ENCODE measurements at regions of chr9 and their contacts with region 1.

Region 1: GRCh38 chr9:127444921-127445850 is 6.0 kb downstream of the RPL12 start:
- DNase-seq: peak in 1 of 2 donors; percentile 27
- H3K4me3 ChIP-seq: no peak overlapping the region
- H3K27ac ChIP-seq: peak overlapping the region; percentile 44 to 54
- H3K4me1 ChIP-seq: no peaks in the 10 kb centered on the region
- H3K27me3 ChIP-seq: no peaks in the 10 kb centered on the region
- CTCF ChIP-seq: no peak
- POLR2A ChIP-seq: no peak

Region 2: DNA sequence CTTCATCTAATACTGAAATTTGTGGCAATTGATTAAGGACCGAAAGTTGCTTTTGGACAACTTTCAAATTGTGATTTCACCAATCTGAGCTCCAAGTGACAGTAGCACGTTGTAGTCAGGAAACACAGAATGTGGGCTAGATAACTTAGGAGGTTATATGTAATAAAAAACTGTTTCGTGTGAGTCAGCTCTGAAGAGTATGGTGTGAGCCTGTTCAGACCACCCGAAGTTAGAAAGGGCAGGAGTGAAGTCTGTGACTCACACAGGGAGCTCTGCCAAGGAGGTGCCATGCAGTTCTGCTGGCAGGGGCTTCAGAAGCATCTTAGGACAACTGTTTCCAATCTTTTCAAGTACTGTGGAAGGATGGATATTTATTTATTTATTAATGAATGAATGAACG is 601.1 kb before region 1 on chr9:
- intact Hi-C with region 1: no loop called
- DNase-seq: no peak
- H3K4me3 ChIP-seq: no peak overlapping the region
- H3K27ac ChIP-seq: no peak overlapping the region
- H3K4me1 ChIP-seq: peaks cover 0 to 7% of the 10 kb centered on the region in 2 donors
- H3K27me3 ChIP-seq: no peaks in the 10 kb centered on the region
- CTCF ChIP-seq: no peak
- POLR2A ChIP-seq: no peak

Region 3: GRCh38 chr9:128921881-128922763 is 1476.9 kb after region 1 on chr9:
- intact Hi-C with region 1: no loop called
- DNase-seq: peak in 1 of 2 donors; percentile 39
- H3K4me3 ChIP-seq: peak overlapping the region; percentile 56 to 83 (median 67)
- H3K27ac ChIP-seq: peak overlapping the region; percentile 94 to 96
- H3K4me1 ChIP-seq: peaks cover 0 to 3% of the 10 kb centered on the region in 2 donors
- H3K27me3 ChIP-seq: no peaks in the 10 kb centered on the region
- CTCF ChIP-seq: peak in 2 of 3 donors; percentile 23 to 27
- POLR2A ChIP-seq: no peak

Region 4: GRCh38 chr9:128972956-128973355 is 1527.8 kb after region 1 on chr9:
- intact Hi-C with region 1: loop called (anchors 10 kb)
- DNase-seq: no peak
- H3K4me3 ChIP-seq: no peak overlapping the region
- H3K27ac ChIP-seq: no peak overlapping the region
- H3K4me1 ChIP-seq: no peaks in the 10 kb centered on the region
- H3K27me3 ChIP-seq: no peaks in the 10 kb centered on the region
- CTCF ChIP-seq: no peak
- POLR2A ChIP-seq: no peak

Region 5: GRCh38 chr9:129125476-129125875 is 1680.3 kb after region 1 on chr9:
- intact Hi-C with region 1: no loop called
- DNase-seq: no peak
- H3K4me3 ChIP-seq: no peak overlapping the region
- H3K27ac ChIP-seq: no peak overlapping the region
- H3K4me1 ChIP-seq: no peaks in the 10 kb centered on the region
- H3K27me3 ChIP-seq: no peaks in the 10 kb centered on the region
- CTCF ChIP-seq: no peak
- POLR2A ChIP-seq: no peak

Measured in breast epithelium (tissue), 4 donors.